Transverse colon (tissue), 4 donors: ENCODE measurements at regions of chr15 and their contacts with region 1.

Region 1: GRCh38 chr15:86061581-86061980 is 18.1 kb upstream of the AGBL1 start:
- DNase-seq: no peak
- H3K4me3 ChIP-seq: no peak overlapping the region
- H3K27ac ChIP-seq: no peak overlapping the region
- H3K4me1 ChIP-seq: no peaks in the 10 kb centered on the region
- H3K27me3 ChIP-seq: peaks cover 6% of the 10 kb centered on the region
- CTCF ChIP-seq: no peak
- EP300 ChIP-seq: no peak
- POLR2A ChIP-seq: no peak

Region 2: GRCh38 chr15:86001200-86001599 is 60.4 kb before region 1 on chr15:
- in situ Hi-C with region 1: loop called in 1 of 4 experiments (anchors 10 kb)
- intact Hi-C with region 1: no loop called
- DNase-seq: no peak
- H3K4me3 ChIP-seq: no peak overlapping the region
- H3K27ac ChIP-seq: no peak overlapping the region
- H3K4me1 ChIP-seq: no peaks in the 10 kb centered on the region
- H3K27me3 ChIP-seq: no peaks in the 10 kb centered on the region
- CTCF ChIP-seq: no peak
- EP300 ChIP-seq: no peak
- POLR2A ChIP-seq: no peak

Region 3: GRCh38 chr15:86125782-86126181 is 64.2 kb after region 1 on chr15:
- in situ Hi-C with region 1: no loop called
- intact Hi-C with region 1: no loop called
- DNase-seq: no peak
- H3K4me3 ChIP-seq: no peak overlapping the region
- H3K27ac ChIP-seq: no peak overlapping the region
- H3K4me1 ChIP-seq: no peaks in the 10 kb centered on the region
- H3K27me3 ChIP-seq: no peaks in the 10 kb centered on the region
- CTCF ChIP-seq: no peak
- EP300 ChIP-seq: no peak
- POLR2A ChIP-seq: no peak